AG04449 (cell line): ENCODE measurements at regions of chr6 and their contacts with region 1.

Region 1: DNA sequence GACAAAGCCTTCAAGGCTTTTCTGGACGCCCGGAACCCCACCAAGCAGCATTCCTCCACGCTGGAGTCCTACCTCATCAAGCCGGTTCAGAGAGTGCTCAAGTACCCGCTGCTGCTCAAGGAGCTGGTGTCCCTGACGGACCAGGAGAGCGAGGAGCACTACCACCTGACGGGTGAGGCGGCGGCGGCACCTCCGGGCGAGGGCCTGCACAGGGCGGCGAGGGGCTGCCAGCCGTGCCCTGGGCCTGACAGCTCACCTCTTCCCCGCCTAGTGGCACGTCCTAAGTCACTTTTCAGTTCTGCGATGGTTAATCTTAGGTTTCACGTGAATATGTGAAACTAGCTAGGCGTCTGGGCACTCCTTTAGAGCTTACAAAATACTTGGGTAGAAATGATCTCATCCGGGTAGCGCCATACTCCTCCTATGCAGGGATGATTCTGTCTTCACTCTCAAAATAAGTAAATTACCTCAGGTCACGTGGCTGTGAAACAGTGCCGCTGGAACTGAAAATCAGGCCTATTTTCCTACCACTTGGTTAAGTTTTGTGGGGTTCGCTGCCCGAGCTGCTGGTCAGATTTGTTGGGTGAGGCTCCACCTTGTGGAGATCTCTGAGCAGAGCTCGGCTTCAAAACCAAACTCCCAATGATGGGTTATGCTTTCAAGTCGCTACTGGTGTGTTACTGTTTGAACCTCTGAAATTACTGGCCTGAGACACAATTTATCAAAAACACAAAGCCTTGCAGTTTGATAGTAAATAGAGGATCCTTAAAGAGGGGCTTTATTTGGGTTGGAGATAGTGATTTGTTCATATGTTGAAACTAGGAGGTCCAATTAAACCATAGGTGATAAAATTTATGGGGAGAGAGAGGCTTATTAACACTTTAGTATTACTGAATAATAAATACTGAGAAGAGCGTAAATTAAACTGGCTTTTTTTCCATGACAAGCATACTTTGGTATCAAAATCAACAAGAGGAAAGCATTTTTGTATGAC is 15.5 kb upstream of the CLDN20 start:
- DNase-seq: peak; percentile 56
- H3K4me3 ChIP-seq: no peak overlapping the region
- CTCF ChIP-seq: peak; percentile 80

Region 2: GRCh38 chr6:154868143-154868594 is 380.1 kb before region 1 on chr6:
- CTCF ChIA-PET with region 1: interaction called, 11 read pairs
- POLR2A ChIA-PET with region 1: interaction called, 3 read pairs
- DNase-seq: no peak
- H3K4me3 ChIP-seq: no peak overlapping the region
- CTCF ChIP-seq: peak; percentile 49

Region 3: DNA sequence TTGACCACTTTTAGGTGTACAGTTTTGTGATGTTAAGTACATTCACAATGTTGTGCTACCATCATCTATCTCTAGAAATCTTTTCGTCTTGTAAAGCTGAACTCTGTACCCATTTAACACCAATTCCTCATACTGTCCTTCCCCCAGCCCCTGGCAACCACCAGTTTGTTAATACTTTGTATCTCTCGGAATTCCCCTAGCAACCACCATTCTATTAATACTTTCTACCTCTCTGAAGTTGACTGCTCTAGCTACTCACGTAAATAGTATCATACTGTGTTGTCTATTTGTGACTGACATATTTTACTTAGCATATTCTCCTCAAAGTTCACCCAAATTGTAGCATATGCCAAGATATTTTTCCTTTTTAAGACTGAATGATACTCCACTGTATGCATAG is 66.8 kb before region 1 on chr6:
- CTCF ChIA-PET with region 1: interaction called, 292 read pairs
- POLR2A ChIA-PET with region 1: interaction called, 3 read pairs
- DNase-seq: no peak
- H3K4me3 ChIP-seq: no peak overlapping the region
- CTCF ChIP-seq: no peak

Region 4: DNA sequence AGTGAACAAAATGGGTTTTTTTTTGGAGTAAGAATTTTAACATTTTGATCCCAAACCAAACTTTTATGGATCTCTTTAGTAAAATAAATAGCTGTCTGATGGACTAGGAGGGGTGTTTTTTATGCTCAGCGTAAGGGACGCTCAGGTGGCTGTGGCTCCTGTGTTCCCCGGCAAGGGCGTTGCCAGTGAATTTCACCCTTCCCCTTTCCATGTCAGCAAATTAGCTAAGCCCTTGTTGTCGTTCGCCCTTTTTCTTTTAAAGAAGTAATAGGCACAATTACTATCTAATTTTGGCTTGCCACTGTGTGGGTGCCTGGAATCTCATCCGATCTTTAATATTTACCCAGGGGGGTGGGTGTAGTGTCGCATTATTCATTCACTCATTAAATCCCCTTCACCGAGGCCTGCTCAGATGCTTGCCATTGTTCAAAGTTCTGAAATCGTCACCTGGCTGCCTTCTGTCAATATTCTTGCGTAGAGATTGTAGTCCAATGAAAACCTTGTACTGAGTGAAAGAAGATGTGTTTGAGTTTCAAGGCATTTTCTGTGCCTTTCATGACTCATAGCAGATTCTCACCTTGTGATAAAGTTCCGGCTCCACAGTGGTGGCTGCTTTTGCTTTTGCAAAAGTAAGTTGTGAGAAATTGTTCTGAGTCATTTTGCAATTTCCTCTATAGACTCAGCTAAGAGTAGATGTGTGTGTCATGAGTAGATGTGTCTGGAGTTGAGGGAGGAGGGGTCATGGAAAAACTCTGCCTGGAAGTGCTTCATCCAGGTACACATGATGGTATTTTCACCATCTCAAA is 24.5 kb before region 1 on chr6:
- CTCF ChIA-PET with region 1: interaction called, 17 read pairs
- POLR2A ChIA-PET with region 1: interaction called, 3 read pairs
- DNase-seq: peak; percentile 71
- H3K4me3 ChIP-seq: no peak overlapping the region
- CTCF ChIP-seq: no peak

Region 5: GRCh38 chr6:155260686-155261085 is 12.4 kb after region 1 on chr6:
- CTCF ChIA-PET with region 1: interaction called, 32 read pairs
- POLR2A ChIA-PET with region 1: no interaction called
- DNase-seq: no peak
- H3K4me3 ChIP-seq: no peak overlapping the region
- CTCF ChIP-seq: no peak

Region 6: DNA sequence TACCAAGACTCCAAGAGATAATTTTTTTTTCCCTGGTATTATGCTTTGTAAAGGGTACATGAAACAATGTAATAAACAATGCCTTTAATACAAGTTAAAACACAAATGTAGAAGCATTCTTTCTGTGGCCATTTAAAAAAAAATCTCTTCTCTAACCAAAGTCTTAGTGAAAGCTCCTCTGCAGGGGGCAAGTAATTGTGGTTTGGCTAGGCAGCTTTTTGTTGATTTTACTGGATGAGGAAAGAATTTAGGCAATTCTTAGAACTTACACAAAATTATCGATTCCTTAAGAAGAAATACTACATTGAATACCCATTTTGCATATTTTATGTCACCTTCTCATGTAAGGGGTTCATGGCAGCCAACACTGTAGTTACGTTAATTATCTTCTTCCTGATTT is 53.6 kb after region 1 on chr6:
- CTCF ChIA-PET with region 1: interaction called, 11 read pairs
- POLR2A ChIA-PET with region 1: no interaction called
- DNase-seq: peak; percentile 44
- H3K4me3 ChIP-seq: no peak overlapping the region
- CTCF ChIP-seq: no peak